ENCODE measurements at regions of chr17 and their contacts with region 1.

Region 1: DNA sequence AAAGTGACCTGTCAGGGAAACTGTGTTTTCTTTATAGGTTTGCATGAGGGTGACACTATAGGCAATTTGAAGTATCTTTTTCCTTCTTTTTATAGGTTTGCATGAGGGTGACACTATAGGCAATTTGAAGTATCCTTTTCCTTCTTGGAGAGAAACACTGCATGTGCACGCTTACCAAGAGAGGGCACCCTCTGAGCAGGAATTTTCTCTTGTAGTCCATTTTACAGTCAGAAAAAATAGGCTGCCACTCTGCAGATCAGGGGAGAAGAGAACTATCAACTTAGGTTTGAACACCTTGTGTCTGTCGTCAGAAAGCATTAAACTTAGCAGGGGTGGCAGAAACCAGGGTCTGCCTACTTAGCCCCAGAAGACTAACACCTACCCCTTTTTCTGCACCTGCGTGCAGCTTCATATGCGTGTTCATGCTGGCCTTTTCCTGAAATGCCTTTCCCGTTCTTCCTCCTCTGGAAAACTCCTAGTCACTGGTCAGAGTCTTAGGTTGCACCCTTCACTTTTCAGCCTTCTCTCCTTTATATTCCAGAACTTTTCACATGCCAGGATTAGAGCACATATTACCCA is 16.4 kb upstream of the SMIM36 start:
- DNase-seq: no peak
- CTCF ChIP-seq: peak; percentile 63

Region 2: DNA sequence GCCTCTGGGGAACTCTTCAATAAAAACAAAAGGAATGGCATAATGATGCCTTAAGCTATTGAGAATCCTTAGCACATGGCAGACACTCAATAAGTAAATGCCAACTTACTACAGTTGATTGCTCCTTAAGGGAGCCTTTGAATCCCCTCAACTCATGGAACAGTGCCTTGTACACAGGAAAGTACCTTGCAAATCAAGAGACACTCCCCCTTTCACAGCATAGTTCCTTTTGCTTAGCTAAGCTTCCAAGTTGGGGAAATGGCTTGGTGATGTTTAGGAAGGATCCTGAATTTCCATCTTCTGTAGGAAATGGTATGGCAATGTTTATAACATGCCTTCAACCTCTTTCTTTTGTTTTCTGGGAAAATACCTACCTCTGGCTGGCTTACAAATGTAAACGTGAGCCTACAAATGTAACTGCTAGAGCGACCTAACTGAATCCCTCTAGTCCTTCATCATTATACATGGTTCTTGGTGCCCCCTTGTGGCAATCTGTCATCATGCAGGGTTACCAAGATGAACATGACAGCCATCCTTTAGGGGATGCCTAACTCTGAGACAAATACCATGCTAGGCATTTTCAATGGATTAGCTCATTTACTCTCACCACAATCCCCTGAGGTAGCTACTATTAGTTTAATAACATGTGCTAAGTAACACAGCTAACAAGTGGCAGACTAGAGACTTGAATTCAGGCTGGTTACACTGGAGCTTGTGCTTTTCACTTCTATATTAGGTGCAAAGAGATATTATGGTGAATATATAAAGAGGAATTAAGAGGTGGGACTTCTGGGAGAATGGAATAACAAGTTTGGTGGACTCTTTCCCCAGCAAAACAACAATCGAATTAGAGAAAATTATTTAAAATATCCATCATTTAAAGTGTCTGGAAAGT is 170.9 kb before region 1 on chr17:
- CTCF ChIA-PET with region 1: interaction called, 10 read pairs
- POLR2A ChIA-PET with region 1: no interaction called
- DNase-seq: peak; percentile 72
- CTCF ChIP-seq: peak; percentile 77

Region 3: GRCh38 chr17:55601874-55602364 is 74.3 kb after region 1 on chr17:
- CTCF ChIA-PET with region 1: interaction called, 119 read pairs
- POLR2A ChIA-PET with region 1: no interaction called
- DNase-seq: peak; percentile 46
- CTCF ChIP-seq: peak; percentile 70

Region 4: GRCh38 chr17:55641676-55642081 is 114.0 kb after region 1 on chr17:
- CTCF ChIA-PET with region 1: interaction called, 22 read pairs
- POLR2A ChIA-PET with region 1: no interaction called
- DNase-seq: peak; percentile 26
- CTCF ChIP-seq: peak; percentile 35

Region 5: DNA sequence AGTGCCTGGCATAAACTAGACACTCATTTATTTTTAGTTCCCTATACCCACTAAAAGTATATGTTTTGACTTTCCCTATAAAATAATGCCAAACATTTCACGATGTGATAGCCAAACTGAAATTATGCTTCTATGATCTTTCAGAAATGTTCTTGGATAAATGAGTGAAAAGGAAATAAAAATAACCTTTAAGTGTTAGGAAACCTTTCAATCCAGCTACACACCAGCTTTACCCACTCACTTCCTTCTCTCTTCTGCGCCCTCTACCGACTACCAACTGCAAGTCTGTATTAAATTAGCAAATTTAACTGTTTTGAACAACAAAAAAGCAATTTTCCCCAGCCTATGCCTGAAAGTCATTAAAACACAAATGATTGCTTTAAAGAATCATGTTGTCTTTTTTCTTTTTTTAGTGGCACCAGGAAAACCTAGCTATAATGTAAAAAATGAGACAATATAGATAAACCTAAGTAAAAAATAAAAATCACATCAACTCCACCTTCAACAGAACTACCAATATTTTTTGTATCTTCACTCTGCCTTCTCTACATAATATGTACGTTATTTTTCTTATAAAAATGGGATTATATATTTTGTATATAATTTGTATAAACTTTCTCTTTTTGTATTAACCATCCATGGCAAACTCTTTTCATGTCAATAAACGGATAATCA is 208.2 kb after region 1 on chr17:
- CTCF ChIA-PET with region 1: interaction called, 11 read pairs
- POLR2A ChIA-PET with region 1: no interaction called
- DNase-seq: peak; percentile 32
- CTCF ChIP-seq: peak; percentile 57

Measured in GM10248 (cell line).